ENCODE measurements at regions of chr4 and their contacts with region 1.

Region 1: DNA sequence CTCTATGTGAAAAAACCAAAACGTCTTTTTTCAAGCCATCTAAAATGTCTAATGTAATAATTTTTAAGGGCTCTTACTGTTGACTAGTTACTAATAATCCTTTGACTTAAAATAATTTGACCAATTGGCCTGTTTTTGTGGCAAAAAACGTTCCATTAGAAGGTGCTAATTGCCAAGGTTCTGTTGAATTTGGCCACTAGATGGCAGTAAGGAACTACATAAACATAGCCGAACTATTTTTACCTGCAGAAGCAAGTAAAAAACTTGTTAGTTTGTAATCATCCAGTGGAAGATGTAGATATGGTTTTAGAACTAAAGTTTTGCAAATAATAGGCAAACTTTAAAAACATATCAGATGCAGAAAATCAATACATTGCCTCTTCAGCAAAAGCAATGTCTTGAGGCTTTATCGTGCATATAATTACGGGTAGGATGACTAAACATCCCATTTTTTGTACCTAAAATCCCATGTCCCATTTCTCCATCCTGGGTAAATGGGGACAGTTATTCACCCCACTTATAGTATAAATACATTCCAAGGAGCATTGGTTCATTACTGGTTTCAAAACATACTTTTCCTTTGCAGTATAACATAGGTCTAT is 57.6 kb downstream of the PROM1 start:
- DNase-seq: no peak
- ATAC-seq: peak; percentile 58
- H3K4me3 ChIP-seq: no peak overlapping the region
- H3K27ac ChIP-seq: no peak overlapping the region
- H3K4me1 ChIP-seq: no peaks in the 10 kb centered on the region
- H3K27me3 ChIP-seq: no peaks in the 10 kb centered on the region
- CTCF ChIP-seq: peak; percentile 88

Region 2: GRCh38 chr4:16264798-16265197 is 238.5 kb after region 1 on chr4:
- intact Hi-C with region 1: loop called (anchors 10 kb)
- DNase-seq: no peak
- ATAC-seq: peak; percentile 75
- H3K4me3 ChIP-seq: no peak overlapping the region
- H3K27ac ChIP-seq: no peak overlapping the region
- H3K4me1 ChIP-seq: peaks cover 7% of the 10 kb centered on the region
- H3K27me3 ChIP-seq: no peaks in the 10 kb centered on the region
- CTCF ChIP-seq: peak; percentile 68